A549 (cell line): ENCODE measurements at regions of chr1 and their contacts with region 1.

Region 1: GRCh38 chr1:21318714-21319159 is 28.5 kb upstream of the ECE1 start:
- DNase-seq: no peak
- ATAC-seq: no peak
- H3K4me3 ChIP-seq: no peak overlapping the region
- H3K27ac ChIP-seq: peak overlapping the region; percentile 94 to 98
- H3K4me1 ChIP-seq: peaks cover 58% of the 10 kb centered on the region
- CTCF ChIP-seq: no peak
- EP300 ChIP-seq: no peak
- POLR2A ChIP-seq: no peak
- RAD21 ChIP-seq: no peak

Region 2: DNA sequence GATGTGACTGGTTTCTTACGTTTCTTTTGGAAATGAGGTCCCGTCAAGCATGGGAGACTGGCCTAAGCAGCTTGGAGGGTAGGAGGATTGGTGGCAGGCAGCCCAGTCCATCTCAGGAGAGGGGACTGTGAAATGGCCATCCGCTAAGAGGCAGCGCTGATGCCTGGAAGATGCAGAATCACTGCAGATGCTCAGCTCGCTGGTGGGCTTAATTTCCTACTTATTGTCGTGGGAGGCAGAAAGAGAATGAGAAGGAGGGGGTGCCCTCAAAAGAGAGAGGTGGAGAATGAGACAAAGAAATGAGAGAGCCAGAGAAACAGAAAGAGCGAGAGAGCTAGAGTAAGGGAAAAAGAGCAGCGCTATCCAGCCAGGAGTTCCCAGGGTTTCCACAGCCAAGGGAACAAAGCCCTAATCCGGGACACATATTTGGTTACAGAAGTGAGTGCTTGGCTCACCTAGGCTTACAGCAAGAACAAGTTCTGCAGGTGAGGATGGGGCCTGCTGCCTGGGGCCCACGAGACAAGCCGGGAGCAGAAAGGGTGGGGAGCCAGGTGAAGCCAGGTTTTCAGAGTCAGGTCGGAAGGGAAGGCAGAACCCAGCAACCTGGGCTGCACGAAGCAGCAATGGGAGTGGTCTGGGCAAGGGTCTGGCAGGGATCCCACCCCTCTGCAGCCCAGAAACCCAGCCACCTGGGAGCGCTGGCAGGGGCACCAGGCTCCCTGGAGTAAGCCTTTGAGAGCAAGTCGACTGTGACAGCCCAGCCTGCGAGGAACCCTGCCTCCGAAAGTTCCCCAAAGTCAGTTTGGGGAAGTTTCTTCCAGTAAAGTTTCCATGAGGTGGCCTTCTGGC is 34.3 kb before region 1 on chr1:
- CTCF ChIA-PET with region 1: no interaction called
- POLR2A ChIA-PET with region 1: no interaction called
- DNase-seq: no peak
- ATAC-seq: no peak
- H3K4me3 ChIP-seq: no peak overlapping the region
- H3K27ac ChIP-seq: no peak overlapping the region
- H3K4me1 ChIP-seq: peaks cover 23% of the 10 kb centered on the region
- CTCF ChIP-seq: no peak
- EP300 ChIP-seq: no peak
- POLR2A ChIP-seq: no peak
- RAD21 ChIP-seq: no peak

Region 3: DNA sequence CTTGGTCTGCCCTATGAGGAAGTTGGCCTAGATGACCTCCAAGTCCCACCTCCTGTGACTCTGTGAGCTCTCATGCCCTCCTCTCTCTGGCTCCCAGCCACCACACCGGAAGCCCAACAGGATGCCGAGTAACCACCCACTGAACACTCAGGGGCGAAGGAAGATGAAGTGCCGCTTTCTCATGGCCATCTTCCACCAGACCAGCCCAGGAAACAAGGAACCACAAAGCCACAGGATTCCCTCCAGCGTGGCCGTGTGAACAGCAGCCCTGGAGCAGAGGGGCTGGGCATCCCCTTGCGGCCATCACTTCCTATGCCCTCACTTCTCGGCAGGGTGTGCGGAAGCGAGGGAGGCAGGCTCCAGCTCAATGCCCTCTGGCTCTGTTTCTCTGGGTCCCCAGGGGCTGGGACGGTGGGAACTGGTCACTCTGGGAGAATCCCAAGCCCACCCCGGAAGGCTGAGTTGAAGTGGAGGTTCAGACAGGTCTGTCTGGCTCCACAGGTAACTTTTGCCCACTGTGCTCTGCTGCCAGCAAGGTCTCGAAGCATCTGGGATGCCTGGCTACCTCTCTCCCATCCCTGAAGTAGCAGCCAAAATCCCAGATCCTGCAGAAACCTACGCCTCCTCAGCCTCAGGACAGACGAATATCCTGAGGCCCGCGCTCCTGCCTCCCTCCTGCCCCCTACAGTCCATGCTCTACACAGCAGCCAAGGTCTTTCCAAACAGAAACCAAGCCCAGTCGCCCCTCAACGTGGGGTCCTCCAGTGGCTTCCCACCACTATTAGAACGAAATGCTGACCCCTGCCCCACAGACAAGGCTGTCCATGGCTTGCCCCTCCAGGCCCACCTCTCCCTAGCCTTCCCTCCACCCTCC is 15.7 kb after region 1 on chr1:
- CTCF ChIA-PET with region 1: interaction called, 33 read pairs
- POLR2A ChIA-PET with region 1: no interaction called
- DNase-seq: peak; percentile 41 to 65
- ATAC-seq: peak; percentile 81 to 84
- H3K4me3 ChIP-seq: 0 out of 3 replicates have a peak overlapping the region, but pooled peaks have one; percentile 9
- H3K27ac ChIP-seq: peak overlapping the region; percentile 89 to 90
- H3K4me1 ChIP-seq: peaks cover 93% of the 10 kb centered on the region
- CTCF ChIP-seq: peak; percentile 60
- EP300 ChIP-seq: no peak
- POLR2A ChIP-seq: no peak
- RAD21 ChIP-seq: peak; percentile 68